Natural killer cell (primary cell): ENCODE measurements at regions of chr6 and their contacts with region 1.

Region 1: GRCh38 chr6:25717866-25718740 is 36.4 kb upstream of the SLC17A4 start:
- DNase-seq: peak in 1 of 2 donors; percentile 46
- ATAC-seq: no peak
- H3K4me3 ChIP-seq: no peak overlapping the region
- H3K4me3 Mint-ChIP-seq: no peak overlapping the region
- H3K27ac ChIP-seq: no peak overlapping the region
- H3K27ac Mint-ChIP-seq: no peak overlapping the region
- H3K4me1 ChIP-seq: no peaks in the 10 kb centered on the region
- H3K4me1 Mint-ChIP-seq: no peaks in the 10 kb centered on the region
- H3K27me3 ChIP-seq: peaks cover 3% of the 10 kb centered on the region
- H3K27me3 Mint-ChIP-seq: peaks cover 9 to 11% of the 10 kb centered on the region in 2 donors
- CTCF ChIP-seq: peak; percentile 40

Region 2: GRCh38 chr6:25889877-25890853 is 172.1 kb after region 1 on chr6:
- intact Hi-C with region 1: loop called (anchors 1 kb)
- DNase-seq: peak in 1 of 2 donors; percentile 64
- ATAC-seq: no peak
- H3K4me3 ChIP-seq: no peak overlapping the region
- H3K4me3 Mint-ChIP-seq: no peak overlapping the region
- H3K27ac ChIP-seq: no peak overlapping the region
- H3K27ac Mint-ChIP-seq: no peak overlapping the region
- H3K4me1 ChIP-seq: no peaks in the 10 kb centered on the region
- H3K4me1 Mint-ChIP-seq: no peaks in the 10 kb centered on the region
- H3K27me3 ChIP-seq: no peaks in the 10 kb centered on the region
- H3K27me3 Mint-ChIP-seq: peaks cover 3 to 6% of the 10 kb centered on the region in 2 donors
- CTCF ChIP-seq: peak; percentile 33

Region 3: GRCh38 chr6:25942561-25943147 is 224.6 kb after region 1 on chr6:
- intact Hi-C with region 1: loop called (anchors 1 kb)
- DNase-seq: peak in 1 of 2 donors; percentile 67
- ATAC-seq: peak in 2 of 3 donors; percentile 31 to 62
- H3K4me3 ChIP-seq: no peak overlapping the region
- H3K4me3 Mint-ChIP-seq: no peak overlapping the region
- H3K27ac ChIP-seq: no peak overlapping the region
- H3K27ac Mint-ChIP-seq: no peak overlapping the region
- H3K4me1 ChIP-seq: no peaks in the 10 kb centered on the region
- H3K4me1 Mint-ChIP-seq: peaks cover 5 to 6% of the 10 kb centered on the region in 2 donors
- H3K27me3 ChIP-seq: no peaks in the 10 kb centered on the region
- H3K27me3 Mint-ChIP-seq: peaks cover 12 to 35% of the 10 kb centered on the region in 2 donors
- CTCF ChIP-seq: peak; percentile 41

Region 4: GRCh38 chr6:26003102-26003694 is 285.1 kb after region 1 on chr6:
- intact Hi-C with region 1: loop called (anchors 5 kb)
- DNase-seq: peak; percentile 44 to 74
- ATAC-seq: peak in 2 of 3 donors; percentile 74
- H3K4me3 ChIP-seq: no peak overlapping the region
- H3K4me3 Mint-ChIP-seq: no peak overlapping the region
- H3K27ac ChIP-seq: no peak overlapping the region
- H3K27ac Mint-ChIP-seq: no peak overlapping the region
- H3K4me1 ChIP-seq: no peaks in the 10 kb centered on the region
- H3K4me1 Mint-ChIP-seq: no peaks in the 10 kb centered on the region
- H3K27me3 ChIP-seq: no peaks in the 10 kb centered on the region
- H3K27me3 Mint-ChIP-seq: no peaks in the 10 kb centered on the region
- CTCF ChIP-seq: peak; percentile 82